ENCODE measurements at regions of chr19 and their contacts with region 1.

Region 1: GRCh38 chr19:47863514-47863936 is 4.5 kb downstream of the TPRX2 start:
- DNase-seq: peak; percentile 82 to 97
- ATAC-seq: peak; percentile 91 to 98
- H3K4me3 ChIP-seq: no peak overlapping the region
- H3K27ac ChIP-seq: no peak overlapping the region
- H3K4me1 ChIP-seq: peaks cover 1% of the 10 kb centered on the region
- CTCF ChIP-seq: peak; percentile 98
- EP300 ChIP-seq: no peak
- POLR2A ChIP-seq: no peak
- RAD21 ChIP-seq: peak; percentile 81 to 89

Region 2: GRCh38 chr19:47348819-47349795 is 514.4 kb before region 1 on chr19 and contains the start of gene DHX34:
- CTCF ChIA-PET with region 1: no interaction called
- POLR2A ChIA-PET with region 1: no interaction called
- DNase-seq: peak; percentile 100
- ATAC-seq: peak; percentile 97 to 98
- H3K4me3 ChIP-seq: peak within 1 kb of the TSS; percentile 74
- H3K27ac ChIP-seq: peak within 1 kb of the TSS; percentile 88 to 92
- H3K4me1 ChIP-seq: peaks cover 22% of the 10 kb centered on the region
- CTCF ChIP-seq: peak; percentile 97
- EP300 ChIP-seq: no peak
- POLR2A ChIP-seq: peak; percentile 91
- RAD21 ChIP-seq: peak in 1 of 2 experiments; percentile 45; a peak in 2 of 5 replicates
- polyA plus RNA-seq, gene DHX34: 12.4 and 14.4 TPM in 2 replicates

Region 3: DNA sequence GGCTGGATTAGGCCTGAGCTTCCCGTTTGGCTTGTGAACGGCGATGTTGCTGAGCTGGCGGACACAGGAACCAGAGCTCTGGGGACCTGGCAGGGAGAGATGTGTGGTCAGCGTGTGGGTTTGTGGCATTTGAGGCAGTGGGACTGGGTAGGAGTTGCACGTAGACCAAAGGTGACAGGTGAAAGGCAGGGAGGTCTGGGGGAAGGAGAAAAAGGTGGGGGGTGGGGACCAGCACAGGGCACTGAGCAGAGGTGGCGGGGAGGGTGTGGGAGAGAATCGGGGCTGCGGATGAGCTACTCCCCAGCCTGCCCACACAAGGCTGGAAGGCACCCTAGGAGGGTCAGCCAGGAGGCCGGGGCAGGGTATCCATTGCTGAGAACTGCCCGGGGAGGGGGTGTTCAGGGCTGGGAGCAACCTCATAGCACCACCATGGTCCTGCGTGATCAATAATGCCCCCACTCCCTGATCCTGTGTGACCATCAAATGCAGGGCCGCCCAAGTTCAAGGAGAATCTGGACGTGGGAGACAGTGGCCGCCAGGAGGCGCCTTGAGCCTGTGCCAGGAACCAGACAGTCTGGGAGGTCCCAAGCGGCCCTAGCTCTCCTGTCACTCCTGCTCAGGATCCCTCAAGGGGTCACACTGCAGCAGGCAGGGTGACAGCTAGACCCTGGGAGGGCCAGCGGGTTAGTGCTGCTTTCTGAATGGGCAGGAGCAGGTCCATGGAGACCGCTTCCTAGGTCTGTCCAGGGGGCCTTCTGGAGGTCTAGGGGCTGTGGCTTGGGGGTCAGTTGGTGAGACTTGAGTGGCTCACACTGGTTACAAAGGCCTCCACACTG is 97.8 kb before region 1 on chr19:
- CTCF ChIA-PET with region 1: interaction called, 35 read pairs
- POLR2A ChIA-PET with region 1: no interaction called
- DNase-seq: peak; percentile 58 to 74
- ATAC-seq: peak; percentile 66 to 85
- H3K4me3 ChIP-seq: no peak overlapping the region
- H3K27ac ChIP-seq: no peak overlapping the region
- H3K4me1 ChIP-seq: no peaks in the 10 kb centered on the region
- CTCF ChIP-seq: peak; percentile 83
- EP300 ChIP-seq: no peak
- POLR2A ChIP-seq: no peak
- RAD21 ChIP-seq: peak; percentile 61 to 84

Region 4: DNA sequence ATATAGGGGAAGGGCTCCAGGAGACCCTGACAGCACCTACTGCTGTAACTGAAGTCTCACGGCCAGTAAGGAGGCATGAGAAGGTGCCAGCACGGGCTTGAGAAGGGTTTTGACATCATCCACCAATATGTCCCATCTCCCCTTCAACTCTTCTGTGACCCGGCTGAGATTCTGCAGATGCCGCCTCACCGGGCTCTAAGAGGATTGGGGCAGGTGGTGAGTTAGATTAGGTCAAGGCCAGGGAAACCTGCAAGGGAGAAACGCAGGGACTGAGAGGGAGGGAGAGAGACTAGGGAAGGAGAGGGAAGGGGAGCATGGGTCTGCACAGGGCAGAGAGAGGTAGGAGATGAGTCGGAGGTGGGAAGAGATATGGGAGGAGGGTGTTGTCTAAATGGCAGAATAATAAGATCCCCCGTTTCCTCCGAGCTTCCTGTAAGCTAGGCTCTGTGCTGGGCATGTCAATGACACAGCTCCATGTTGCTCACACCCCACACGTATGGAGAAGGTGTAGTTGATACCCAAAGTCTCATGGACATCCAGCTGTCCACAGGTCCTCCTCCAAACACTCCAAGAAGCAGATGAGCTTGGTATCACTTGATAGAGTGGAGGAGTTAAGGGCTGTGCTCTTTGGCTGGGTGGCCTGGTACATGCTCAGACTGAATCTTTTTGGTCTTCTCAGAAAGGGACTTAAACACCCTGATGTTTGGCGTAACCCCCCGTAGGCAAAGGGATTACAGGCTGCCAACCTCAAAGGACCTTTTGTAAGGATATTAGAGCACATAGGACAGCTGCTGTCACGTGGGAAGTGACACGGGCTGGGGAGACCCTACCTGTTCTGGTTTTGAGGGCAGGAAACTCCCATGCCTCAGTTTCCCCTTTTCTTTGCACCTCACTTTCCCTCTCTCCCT is 65.3 kb before region 1 on chr19:
- CTCF ChIA-PET with region 1: interaction called, 22 read pairs
- POLR2A ChIA-PET with region 1: no interaction called
- DNase-seq: no peak
- ATAC-seq: peak; percentile 62 to 69
- H3K4me3 ChIP-seq: no peak overlapping the region
- H3K27ac ChIP-seq: no peak overlapping the region
- H3K4me1 ChIP-seq: no peaks in the 10 kb centered on the region
- CTCF ChIP-seq: no peak
- EP300 ChIP-seq: no peak
- POLR2A ChIP-seq: no peak
- RAD21 ChIP-seq: no peak

Region 5: GRCh38 chr19:47813304-47814004 is 50.1 kb before region 1 on chr19:
- CTCF ChIA-PET with region 1: interaction called, 42 read pairs
- POLR2A ChIA-PET with region 1: interaction called, 4 read pairs
- DNase-seq: peak; percentile 70 to 85
- ATAC-seq: peak; percentile 95 to 97
- H3K4me3 ChIP-seq: no peak overlapping the region
- H3K27ac ChIP-seq: no peak overlapping the region
- H3K4me1 ChIP-seq: no peaks in the 10 kb centered on the region; the same call in 2 of the 3 replicates
- CTCF ChIP-seq: peak; percentile 80
- EP300 ChIP-seq: no peak
- POLR2A ChIP-seq: no peak
- RAD21 ChIP-seq: peak; percentile 54 to 63

Region 6: DNA sequence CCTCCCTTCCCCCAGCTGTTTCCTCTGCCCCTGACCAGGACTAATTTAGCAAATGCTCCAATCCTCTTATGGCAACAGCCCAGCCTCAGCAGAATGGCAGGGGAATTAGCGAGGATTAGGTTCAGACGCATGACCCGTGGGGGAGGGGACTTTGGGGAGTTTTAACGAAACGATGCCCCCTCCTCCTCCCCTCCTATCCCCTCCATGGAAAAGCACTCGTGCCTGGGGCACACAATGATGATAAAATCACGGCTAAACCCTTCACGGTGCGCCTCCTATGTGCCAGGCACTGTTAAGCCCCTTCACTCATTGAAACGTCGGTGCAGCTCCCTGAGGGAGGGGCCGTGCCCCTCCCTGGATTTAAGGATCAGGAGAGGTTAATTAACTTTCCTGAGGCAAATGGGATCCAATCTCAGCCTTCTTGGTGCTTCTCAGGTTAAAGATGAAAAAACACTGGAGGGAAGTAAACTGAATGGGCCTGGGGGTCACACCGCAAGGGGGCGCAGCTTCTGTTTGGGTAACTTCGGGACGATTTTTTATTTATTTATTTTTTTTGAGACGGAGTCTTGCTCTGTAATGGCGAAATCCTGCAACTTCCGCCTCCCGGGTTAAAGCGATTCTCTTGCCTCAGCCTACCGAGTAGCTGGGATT is 14.6 kb before region 1 on chr19:
- CTCF ChIA-PET with region 1: interaction called, 330 read pairs
- POLR2A ChIA-PET with region 1: no interaction called
- DNase-seq: peak; percentile 47 to 82
- ATAC-seq: peak; percentile 65 to 73; a peak in 5 of 6 replicates
- H3K4me3 ChIP-seq: peak overlapping the region; percentile 36
- H3K27ac ChIP-seq: peak overlapping the region in 1 of 2 experiments; percentile 80; a peak in 3 of 6 replicates
- H3K4me1 ChIP-seq: no peaks in the 10 kb centered on the region
- CTCF ChIP-seq: peak; percentile 97
- EP300 ChIP-seq: no peak
- POLR2A ChIP-seq: no peak
- RAD21 ChIP-seq: peak; percentile 32 to 33; a peak in 4 of 5 replicates

Region 7: DNA sequence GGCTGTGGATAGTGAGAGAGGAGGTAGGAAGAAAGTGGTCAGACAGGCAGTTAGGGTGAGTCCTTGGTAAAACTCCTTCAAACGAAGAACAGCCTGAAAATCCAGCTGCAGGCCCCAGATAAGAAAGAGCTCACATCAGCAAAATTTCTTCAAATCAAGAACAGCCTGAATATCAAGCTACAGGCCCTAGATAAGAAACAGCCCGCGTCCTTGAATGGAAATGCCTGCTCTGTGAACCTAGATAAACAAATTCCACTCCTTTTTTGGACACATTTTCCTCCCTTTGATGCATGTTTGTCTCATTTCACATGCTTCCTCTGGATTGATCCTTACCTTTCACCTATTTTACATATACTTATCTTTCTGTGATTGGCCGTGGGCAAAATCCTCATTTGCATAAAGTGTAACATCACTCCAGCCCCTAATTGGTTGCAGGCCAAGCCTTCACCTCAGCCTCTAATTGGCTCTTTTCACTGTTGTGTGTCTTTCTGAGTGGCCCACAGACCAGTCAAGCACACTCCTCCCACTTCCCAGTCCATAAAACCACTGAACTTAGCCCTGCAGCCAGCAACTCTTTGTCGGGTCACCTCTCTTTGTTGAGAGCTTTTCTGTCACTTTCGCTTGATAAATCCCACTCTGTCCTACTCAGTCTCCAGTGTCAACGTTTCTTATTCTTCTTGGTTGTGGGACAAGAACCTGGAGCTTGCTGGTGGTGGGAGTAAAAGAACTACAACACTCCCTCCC is 28.6 kb after region 1 on chr19:
- CTCF ChIA-PET with region 1: interaction called, 12 read pairs
- POLR2A ChIA-PET with region 1: no interaction called
- DNase-seq: no peak
- ATAC-seq: 0 out of 6 replicates have a peak, but pooled peaks of 1 of the 2 experiments have one; percentile 24
- H3K4me3 ChIP-seq: no peak overlapping the region
- H3K27ac ChIP-seq: no peak overlapping the region
- H3K4me1 ChIP-seq: no peaks in the 10 kb centered on the region
- CTCF ChIP-seq: no peak
- EP300 ChIP-seq: no peak
- POLR2A ChIP-seq: no peak
- RAD21 ChIP-seq: no peak

Measured in A549 (cell line).